Adrenal gland (tissue), 19 donors: ENCODE measurements at regions of chr12 and their contacts with region 1.

Region 1: DNA sequence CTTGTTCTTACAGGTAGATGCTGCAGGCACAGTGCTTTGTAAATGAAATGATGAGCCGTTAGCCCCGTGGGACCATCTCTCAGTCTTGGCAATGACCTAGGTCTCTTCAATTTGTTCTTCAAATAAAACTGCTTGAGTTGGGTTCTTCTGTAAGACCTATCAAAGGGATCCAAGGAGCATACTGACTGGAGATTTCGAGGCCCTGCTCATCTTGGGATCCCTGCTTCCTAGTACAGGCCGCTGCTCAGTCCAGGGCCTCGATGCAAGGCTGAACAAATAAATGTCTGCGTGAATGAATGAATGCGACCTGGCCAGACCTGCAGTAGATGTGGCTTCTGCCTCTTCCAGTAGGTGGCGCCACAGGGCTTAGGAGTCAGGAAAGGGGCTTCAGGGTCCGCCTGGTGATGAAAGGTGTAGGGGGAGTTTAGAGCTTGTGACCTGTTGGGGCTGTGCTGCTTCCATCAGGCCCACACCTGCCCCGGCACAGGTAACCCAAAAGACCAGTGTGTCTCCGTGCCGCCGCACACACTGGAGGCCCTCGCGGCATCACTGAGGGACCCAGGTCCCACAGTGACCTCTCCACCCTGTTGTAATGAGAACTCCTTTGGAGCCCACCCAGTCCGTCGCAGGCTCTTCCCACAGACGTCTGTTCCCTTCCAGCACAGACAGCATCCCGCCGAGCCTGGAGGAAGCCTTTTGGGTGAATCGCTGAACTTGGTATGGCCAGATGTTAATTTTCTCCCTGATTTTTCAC is 4.4 kb downstream of the CACNA1C start:
- DNase-seq: peak in 6 of 7 donors; percentile 46 to 82 (median 52)
- H3K4me3 ChIP-seq: no peak overlapping the region
- H3K27ac ChIP-seq: no peak overlapping the region
- H3K4me1 ChIP-seq: no peaks in the 10 kb centered on the region
- H3K27me3 ChIP-seq: no peaks in the 10 kb centered on the region
- CTCF ChIP-seq: peak; percentile 41 to 69 (median 63)
- POLR2A ChIP-seq: no peak

Region 2: DNA sequence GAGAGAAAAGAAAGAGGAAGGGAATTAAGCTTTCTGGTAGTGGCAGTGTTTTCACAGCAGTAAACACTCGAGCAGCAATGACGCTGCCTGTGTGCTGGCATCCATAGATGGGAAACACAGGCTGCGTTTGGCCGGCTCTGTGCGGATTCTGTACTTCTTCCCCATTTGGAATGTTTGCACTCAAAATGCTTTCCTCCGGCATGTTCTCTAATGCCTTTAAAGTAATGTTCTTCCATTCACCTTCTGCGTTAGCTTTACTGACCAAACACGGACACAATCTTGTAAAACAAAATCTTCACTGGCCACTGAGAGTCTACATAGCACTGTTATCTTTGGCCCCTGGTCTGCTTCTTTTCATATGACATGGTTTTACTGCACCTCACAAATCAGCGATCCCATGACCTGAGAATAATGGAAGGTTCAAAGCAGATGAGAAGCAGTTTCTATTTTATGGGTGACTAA is 84.3 kb before region 1 on chr12:
- intact Hi-C with region 1: no loop called
- DNase-seq: peak in 1 of 7 donors; percentile 57
- H3K4me3 ChIP-seq: no peak overlapping the region
- H3K27ac ChIP-seq: peak overlapping the region in 2 of 5 donors; percentile 44 to 59
- H3K4me1 ChIP-seq: peaks cover 11 to 58% of the 10 kb centered on the region in 2 donors
- H3K27me3 ChIP-seq: no peaks in the 10 kb centered on the region
- CTCF ChIP-seq: no peak
- POLR2A ChIP-seq: no peak

Region 3: GRCh38 chr12:2284857-2285256 is 227.6 kb after region 1 on chr12:
- intact Hi-C with region 1: loop called (anchors 10 kb)
- DNase-seq: peak; percentile 53 to 83 (median 63)
- H3K4me3 ChIP-seq: no peak overlapping the region
- H3K27ac ChIP-seq: peak overlapping the region in 1 of 5 donors; percentile 83
- H3K4me1 ChIP-seq: peaks cover 0 to 10% of the 10 kb centered on the region in 2 donors
- H3K27me3 ChIP-seq: no peaks in the 10 kb centered on the region
- CTCF ChIP-seq: peak; percentile 23 to 61 (median 48)
- POLR2A ChIP-seq: no peak

Region 4: GRCh38 chr12:2583091-2583497 is 525.9 kb after region 1 on chr12:
- intact Hi-C with region 1: loop called (anchors 5 to 10 kb)
- DNase-seq: peak; percentile 34 to 78 (median 68)
- H3K4me3 ChIP-seq: no peak overlapping the region
- H3K27ac ChIP-seq: no peak overlapping the region
- H3K4me1 ChIP-seq: peaks cover 0 to 8% of the 10 kb centered on the region in 2 donors
- H3K27me3 ChIP-seq: no peaks in the 10 kb centered on the region
- CTCF ChIP-seq: peak; percentile 38 to 95 (median 75)
- POLR2A ChIP-seq: no peak